ENCODE measurements at regions of chr18 and their contacts with region 1.

Region 1: DNA sequence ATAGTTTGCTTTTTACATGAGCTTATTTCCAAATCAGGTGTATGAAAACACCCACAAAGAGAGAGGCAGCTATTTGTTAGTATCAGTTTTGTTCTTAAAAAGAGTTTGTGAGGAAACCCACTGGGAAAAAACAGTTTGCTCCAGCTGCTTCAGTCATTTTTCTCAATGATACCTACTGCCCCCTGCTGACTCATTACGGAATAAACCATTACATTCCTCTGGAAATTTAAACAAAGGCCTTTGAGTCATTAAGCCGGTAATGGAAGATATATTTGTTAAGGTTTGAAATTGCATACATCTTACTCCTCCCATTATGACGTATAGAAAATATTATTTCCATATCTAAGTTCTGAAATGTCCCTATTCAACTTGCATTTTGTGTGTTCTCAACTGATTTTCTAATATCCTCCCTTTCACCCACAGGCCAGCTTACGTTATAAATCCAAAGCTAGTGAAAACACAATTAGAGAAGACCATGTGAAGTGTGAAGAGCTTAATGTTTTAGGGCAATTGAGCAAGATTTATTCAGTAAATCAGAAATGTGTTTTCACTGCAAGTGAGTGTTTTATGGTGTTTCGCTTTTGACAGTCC is 761.6 kb downstream of the DSC3 start:
- DNase-seq: peak; percentile 1
- H3K4me3 ChIP-seq: no peak overlapping the region
- H3K27ac ChIP-seq: no peak overlapping the region
- H3K4me1 ChIP-seq: no peaks in the 10 kb centered on the region; a peak in 1 of 4 replicates
- H3K27me3 ChIP-seq: no peaks in the 10 kb centered on the region
- CTCF ChIP-seq: peak; percentile 83
- EP300 ChIP-seq: no peak
- RAD21 ChIP-seq: peak; percentile 75

Region 2: DNA sequence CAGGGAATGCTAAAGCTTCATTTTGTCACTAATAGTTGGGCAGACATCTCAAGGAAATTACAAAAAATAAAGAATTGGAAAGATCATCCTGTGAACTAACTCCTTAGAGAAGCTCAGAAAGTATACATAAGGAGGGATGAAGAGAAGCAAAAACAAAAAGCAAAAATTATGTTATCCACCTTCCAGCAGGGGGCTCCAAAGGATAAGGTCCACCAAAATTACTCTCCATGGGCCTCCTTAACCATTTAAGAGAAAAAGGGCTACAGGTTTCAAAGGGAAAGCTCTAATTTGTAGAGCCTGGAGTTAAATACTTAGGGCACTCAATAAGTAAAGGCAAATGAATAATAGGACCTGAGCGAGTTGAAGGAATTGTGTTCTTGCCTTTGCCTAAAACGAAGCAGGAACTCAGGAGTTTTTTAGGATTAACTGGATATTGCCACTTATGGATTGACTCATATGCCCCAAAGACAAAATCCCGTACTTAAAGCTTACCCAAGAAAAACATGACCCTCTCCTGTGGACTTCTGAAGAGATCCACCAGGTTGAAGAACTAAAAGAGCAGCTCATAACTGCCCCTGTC is 406.4 kb before region 1 on chr18:
- CTCF ChIA-PET with region 1: interaction called, 73 read pairs
- POLR2A ChIA-PET with region 1: no interaction called
- DNase-seq: peak; percentile 23
- H3K4me3 ChIP-seq: no peak overlapping the region
- H3K27ac ChIP-seq: no peak overlapping the region
- H3K4me1 ChIP-seq: no peaks in the 10 kb centered on the region
- H3K27me3 ChIP-seq: no peaks in the 10 kb centered on the region
- CTCF ChIP-seq: peak; percentile 68
- EP300 ChIP-seq: no peak
- RAD21 ChIP-seq: peak; percentile 82

Region 3: GRCh38 chr18:29883114-29883513 is 397.9 kb before region 1 on chr18:
- CTCF ChIA-PET with region 1: interaction called, 73 read pairs
- POLR2A ChIA-PET with region 1: no interaction called
- DNase-seq: no peak
- H3K4me3 ChIP-seq: no peak overlapping the region
- H3K27ac ChIP-seq: no peak overlapping the region
- H3K4me1 ChIP-seq: no peaks in the 10 kb centered on the region
- H3K27me3 ChIP-seq: no peaks in the 10 kb centered on the region
- CTCF ChIP-seq: no peak
- EP300 ChIP-seq: no peak
- RAD21 ChIP-seq: no peak

Region 4: GRCh38 chr18:29892960-29893558 is 387.9 kb before region 1 on chr18:
- CTCF ChIA-PET with region 1: interaction called, 12 read pairs
- POLR2A ChIA-PET with region 1: no interaction called
- DNase-seq: peak; percentile 24
- H3K4me3 ChIP-seq: no peak overlapping the region
- H3K27ac ChIP-seq: no peak overlapping the region
- H3K4me1 ChIP-seq: no peaks in the 10 kb centered on the region
- H3K27me3 ChIP-seq: no peaks in the 10 kb centered on the region
- CTCF ChIP-seq: peak; percentile 69
- EP300 ChIP-seq: no peak
- RAD21 ChIP-seq: peak; percentile 64

Region 5: GRCh38 chr18:29969876-29970275 is 311.1 kb before region 1 on chr18:
- CTCF ChIA-PET with region 1: no interaction called
- POLR2A ChIA-PET with region 1: no interaction called
- DNase-seq: no peak
- H3K4me3 ChIP-seq: no peak overlapping the region
- H3K27ac ChIP-seq: no peak overlapping the region
- H3K4me1 ChIP-seq: no peaks in the 10 kb centered on the region
- H3K27me3 ChIP-seq: no peaks in the 10 kb centered on the region
- CTCF ChIP-seq: no peak
- EP300 ChIP-seq: no peak
- RAD21 ChIP-seq: no peak

Region 6: DNA sequence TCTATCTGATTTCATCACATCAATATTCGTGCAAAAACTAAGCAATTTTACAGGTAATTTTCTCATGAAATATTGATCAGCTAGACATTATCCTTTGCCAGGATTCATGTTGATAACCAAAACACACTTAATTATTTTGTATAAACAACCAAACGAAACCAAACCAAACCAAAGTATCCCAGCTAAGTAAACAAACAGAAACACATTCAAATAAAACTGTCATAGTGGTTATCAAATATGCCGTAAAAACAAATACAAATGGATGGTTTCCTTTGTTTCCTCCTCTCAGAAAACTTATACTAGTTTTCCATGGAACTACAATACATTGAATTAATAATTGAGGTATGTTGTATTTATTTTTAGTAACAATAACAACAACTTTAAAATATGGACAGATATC is 15.8 kb before region 1 on chr18:
- CTCF ChIA-PET with region 1: interaction called, 13 read pairs
- POLR2A ChIA-PET with region 1: no interaction called
- DNase-seq: no peak
- H3K4me3 ChIP-seq: no peak overlapping the region
- H3K27ac ChIP-seq: no peak overlapping the region
- H3K4me1 ChIP-seq: no peaks in the 10 kb centered on the region
- H3K27me3 ChIP-seq: no peaks in the 10 kb centered on the region
- CTCF ChIP-seq: no peak
- EP300 ChIP-seq: no peak
- RAD21 ChIP-seq: no peak